ENCODE measurements at regions of chr19 and their contacts with region 1.

Region 1: DNA sequence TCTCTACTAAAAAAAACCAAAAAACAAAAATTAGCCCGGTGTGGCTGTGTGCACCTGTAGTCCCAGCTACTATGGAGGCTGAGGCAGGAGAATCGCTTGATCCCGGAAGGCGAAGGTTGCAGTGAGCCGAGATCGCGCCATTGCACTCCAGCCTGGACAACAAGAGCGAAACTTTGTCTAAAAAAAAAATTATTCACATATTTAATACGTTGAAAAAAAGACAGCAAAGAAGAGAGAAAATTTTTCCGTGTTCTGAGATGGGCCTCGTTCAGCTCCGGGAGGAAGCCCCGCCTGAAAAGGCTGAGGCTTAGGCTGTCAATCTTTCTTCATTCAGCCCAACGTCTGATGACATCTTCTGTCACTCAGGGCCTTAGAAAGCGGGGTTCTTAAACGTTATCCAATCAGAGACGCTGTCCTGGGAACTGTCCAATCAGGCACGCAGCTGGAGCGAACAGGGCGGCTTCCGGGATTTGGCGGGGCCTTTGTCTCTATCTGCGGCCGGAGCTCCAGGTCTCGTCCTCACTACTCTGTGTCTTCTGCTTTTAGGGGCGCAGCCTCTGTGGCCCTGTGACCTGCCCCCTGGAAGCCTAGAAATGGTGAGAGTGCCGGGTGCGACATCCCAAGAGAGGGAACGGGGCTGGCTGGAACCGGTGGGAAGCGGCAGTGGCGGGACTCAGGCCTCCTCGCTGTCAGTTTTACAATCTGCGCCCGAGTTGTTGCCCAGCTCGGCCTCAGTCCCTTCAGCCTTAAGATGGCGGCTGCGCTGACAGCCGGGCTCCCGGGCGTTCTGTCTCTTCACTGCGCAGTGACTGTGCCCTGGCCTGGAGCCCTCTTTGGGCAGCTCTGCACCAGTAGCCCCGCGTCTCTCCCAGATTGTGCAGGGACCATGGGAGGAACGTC is at the start of gene ZNF726:
- DNase-seq: peak; percentile 82
- ATAC-seq: peak; percentile 98
- H3K4me3 Mint-ChIP-seq: peak within 1 kb of the TSS; percentile 98
- H3K27ac Mint-ChIP-seq: peak within 1 kb of the TSS; percentile 99
- H3K4me1 Mint-ChIP-seq: peaks cover 8% of the 10 kb centered on the region
- H3K27me3 Mint-ChIP-seq: no peaks in the 10 kb centered on the region
- total RNA-seq, gene ZNF726: 14.4 to 20.3 TPM

Region 2: GRCh38 chr19:23686621-23687423 is 227.8 kb before region 1 on chr19 and contains the start of gene ZNF675:
- POLR2A ChIA-PET with region 1: interaction called, 15 read pairs
- DNase-seq: peak; percentile 83
- ATAC-seq: peak; percentile 93
- H3K4me3 Mint-ChIP-seq: peak within 1 kb of the TSS; percentile 98
- H3K27ac Mint-ChIP-seq: peak within 1 kb of the TSS; percentile 99
- H3K4me1 Mint-ChIP-seq: peaks cover 13% of the 10 kb centered on the region
- H3K27me3 Mint-ChIP-seq: no peaks in the 10 kb centered on the region
- total RNA-seq, gene ZNF675: 29.6 to 30.5 TPM

Region 3: GRCh38 chr19:23758187-23759074 is 156.2 kb before region 1 on chr19 and contains the start of gene ZNF681:
- POLR2A ChIA-PET with region 1: interaction called, 20 read pairs
- DNase-seq: peak; percentile 80
- ATAC-seq: peak; percentile 92
- H3K4me3 Mint-ChIP-seq: peak within 1 kb of the TSS; percentile 90
- H3K27ac Mint-ChIP-seq: peak within 1 kb of the TSS; percentile 93
- H3K4me1 Mint-ChIP-seq: peaks cover 15% of the 10 kb centered on the region
- H3K27me3 Mint-ChIP-seq: no peaks in the 10 kb centered on the region
- total RNA-seq, gene ZNF681: 5.8 to 6.0 TPM

Region 4: DNA sequence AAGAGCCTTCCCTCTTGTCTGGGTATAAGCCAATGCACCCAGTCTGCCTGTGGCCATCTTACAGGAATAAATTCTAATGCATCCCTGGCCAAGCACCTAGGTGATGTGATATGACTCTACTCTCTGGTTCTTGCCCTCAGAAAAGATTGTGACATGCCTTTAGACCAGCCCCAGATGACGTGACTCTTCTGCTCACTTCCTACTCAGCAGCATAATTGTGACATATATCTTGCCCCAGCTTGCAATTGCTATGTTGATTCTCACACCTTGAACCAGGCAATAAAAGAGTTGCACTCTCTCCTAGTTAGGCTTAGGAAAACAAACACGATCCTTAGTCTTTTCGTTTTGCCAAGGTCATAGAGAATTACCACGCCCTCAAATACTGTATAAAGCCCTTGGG is 13.3 kb before region 1 on chr19:
- POLR2A ChIA-PET with region 1: no interaction called
- DNase-seq: no peak
- ATAC-seq: no peak
- H3K4me3 Mint-ChIP-seq: no peak overlapping the region
- H3K27ac Mint-ChIP-seq: no peak overlapping the region
- H3K4me1 Mint-ChIP-seq: no peaks in the 10 kb centered on the region
- H3K27me3 Mint-ChIP-seq: no peaks in the 10 kb centered on the region

Region 5: GRCh38 chr19:24033301-24033962 is 118.8 kb after region 1 on chr19:
- POLR2A ChIA-PET with region 1: interaction called, 27 read pairs
- DNase-seq: peak; percentile 78
- ATAC-seq: peak; percentile 99
- H3K4me3 Mint-ChIP-seq: peak overlapping the region; percentile 98
- H3K27ac Mint-ChIP-seq: peak overlapping the region; percentile 98
- H3K4me1 Mint-ChIP-seq: peaks cover 20% of the 10 kb centered on the region
- H3K27me3 Mint-ChIP-seq: no peaks in the 10 kb centered on the region

Region 6: GRCh38 chr19:24086974-24087595 is 172.4 kb after region 1 on chr19 and contains the start of gene ZNF254:
- POLR2A ChIA-PET with region 1: interaction called, 15 read pairs
- DNase-seq: peak; percentile 81
- ATAC-seq: peak; percentile 100
- H3K4me3 Mint-ChIP-seq: peak within 1 kb of the TSS; percentile 97
- H3K27ac Mint-ChIP-seq: peak within 1 kb of the TSS; percentile 99
- H3K4me1 Mint-ChIP-seq: peaks cover 6% of the 10 kb centered on the region
- H3K27me3 Mint-ChIP-seq: no peaks in the 10 kb centered on the region
- total RNA-seq, gene ZNF254: 17.5 to 19.0 TPM

Measured in activated naive CD8-positive, alpha-beta T cell treated with anti-CD3 and anti-CD28 coated beads, Interleukin-2, amount 10 ng/mL, durations not matched to agents 7 days and 5 days (primary cell).